Activated T-helper 1 cell treated with anti-CD3 and anti-CD28 coated beads, Interleukin-12 subunit alpha, Interleukin-12 subunit beta, Interleukin-2, Interleukin-4 antibody, amounts not matched to agents 30 ng/mL and 10 ng/mL and 1 ng/mL, durations not matched to agents 14 hours and 24 hours and 36 hours (primary cell): ENCODE measurements at regions of chr4 and their contacts with region 1.

Region 1: DNA sequence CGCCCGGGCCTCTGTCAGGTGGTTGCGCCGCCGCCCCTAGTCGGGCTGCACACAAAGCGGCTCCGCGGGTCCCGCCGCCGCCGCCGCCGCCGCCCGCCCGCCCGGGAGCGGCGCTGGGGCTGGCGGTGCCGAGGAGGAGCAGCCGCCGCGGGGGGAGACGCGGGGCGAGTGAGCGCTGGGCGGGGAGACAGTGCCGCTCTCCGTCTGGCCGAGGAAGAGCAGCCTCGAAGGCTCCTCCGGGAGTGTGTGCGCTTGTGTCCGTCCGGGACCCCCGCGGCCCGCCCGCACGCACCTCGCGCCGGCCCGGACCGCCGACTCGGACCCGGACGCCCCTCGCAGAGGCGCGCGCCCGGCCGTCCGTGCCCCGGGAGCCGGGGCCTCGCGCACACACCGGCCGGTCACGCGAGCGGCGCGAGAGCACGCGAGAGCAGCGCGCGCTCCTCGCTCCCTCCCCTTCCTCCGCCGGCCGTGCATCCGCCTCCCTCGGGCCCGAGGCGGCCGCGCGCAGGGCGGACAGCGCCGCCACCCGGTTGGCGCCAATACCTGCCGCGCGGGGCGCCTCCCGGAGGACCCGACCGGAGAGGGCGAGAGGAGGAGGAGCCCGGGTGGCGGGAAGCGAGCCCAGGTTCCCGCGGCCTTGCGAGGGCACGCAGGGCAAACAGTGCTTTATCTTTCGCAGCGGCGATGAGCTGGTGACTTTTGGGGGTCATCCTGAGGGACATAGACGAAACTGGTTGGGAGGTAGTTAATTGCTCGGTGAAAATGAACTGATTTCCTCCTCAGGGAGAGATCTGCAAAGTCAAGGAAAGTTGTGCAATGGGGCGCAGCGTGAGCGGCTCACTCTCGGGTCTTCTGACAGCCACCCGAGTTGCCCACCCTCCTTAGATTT is at the start of gene PDS5A:
- DNase-seq: peak; percentile 90
- H3K4me3 Mint-ChIP-seq: peak within 1 kb of the TSS; percentile 95
- H3K27ac Mint-ChIP-seq: peak within 1 kb of the TSS; percentile 94
- H3K4me1 Mint-ChIP-seq: peaks cover 33% of the 10 kb centered on the region
- H3K27me3 Mint-ChIP-seq: no peaks in the 10 kb centered on the region
- total RNA-seq, gene PDS5A: 129 and 131 TPM in 2 replicates

Region 2: GRCh38 chr4:39365830-39366771 is 611.6 kb before region 1 on chr4 and contains the start of gene RFC1:
- intact Hi-C with region 1: loop called (anchors 10 kb)
- DNase-seq: peak; percentile 89
- H3K4me3 Mint-ChIP-seq: peak within 1 kb of the TSS; percentile 95
- H3K27ac Mint-ChIP-seq: peak within 1 kb of the TSS; percentile 94
- H3K4me1 Mint-ChIP-seq: peaks cover 26% of the 10 kb centered on the region
- H3K27me3 Mint-ChIP-seq: no peaks in the 10 kb centered on the region
- total RNA-seq, gene RFC1: 83.3 and 87.1 TPM in 2 replicates

Region 3: DNA sequence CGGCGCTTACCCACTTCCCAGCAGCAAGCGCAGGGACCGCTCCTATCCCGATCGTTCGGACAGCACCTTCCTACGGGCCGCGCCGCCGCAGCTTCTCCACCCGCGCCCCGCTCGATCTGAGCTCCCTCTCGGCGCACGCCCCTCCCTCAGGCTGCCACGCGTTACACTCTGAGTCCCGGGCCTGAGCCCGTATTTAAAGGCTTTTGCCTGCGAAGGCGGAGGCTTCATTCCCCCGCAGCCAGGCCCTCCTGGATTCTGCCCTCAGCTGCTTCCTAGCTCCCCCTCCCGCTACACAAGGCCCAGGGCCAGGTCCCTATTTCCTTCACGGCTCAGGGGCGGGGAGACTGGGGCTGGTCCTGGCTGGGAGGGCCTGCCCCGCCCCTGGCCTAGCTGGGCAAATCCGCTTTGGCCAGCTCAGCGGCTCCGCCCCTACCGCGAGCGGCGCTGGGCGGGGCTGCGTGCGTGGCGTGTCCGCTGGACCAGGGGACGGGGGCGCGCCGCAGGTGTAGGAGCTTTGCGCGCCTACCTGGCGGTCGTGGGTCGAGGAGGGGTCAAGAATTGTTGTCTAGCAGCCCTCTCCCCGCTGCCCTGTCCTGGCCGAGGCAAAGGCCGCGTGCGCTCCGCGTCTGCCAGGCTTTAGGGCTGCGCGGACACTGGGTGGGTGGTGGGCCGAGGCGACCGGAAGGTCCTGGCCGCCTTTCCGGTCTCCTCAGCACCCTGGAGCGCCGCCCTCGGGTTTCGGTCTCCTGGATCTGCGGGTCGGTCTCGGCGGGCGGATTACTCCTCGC is 450.3 kb before region 1 on chr4 and contains the start of gene UGDH:
- intact Hi-C with region 1: loop called (anchors 1 kb)
- DNase-seq: peak; percentile 91
- H3K4me3 Mint-ChIP-seq: peak within 1 kb of the TSS; percentile 99
- H3K27ac Mint-ChIP-seq: peak within 1 kb of the TSS; percentile 92
- H3K4me1 Mint-ChIP-seq: peaks cover 19% of the 10 kb centered on the region
- H3K27me3 Mint-ChIP-seq: no peaks in the 10 kb centered on the region
- total RNA-seq, gene UGDH: 26.0 and 30.6 TPM in 2 replicates

Region 4: DNA sequence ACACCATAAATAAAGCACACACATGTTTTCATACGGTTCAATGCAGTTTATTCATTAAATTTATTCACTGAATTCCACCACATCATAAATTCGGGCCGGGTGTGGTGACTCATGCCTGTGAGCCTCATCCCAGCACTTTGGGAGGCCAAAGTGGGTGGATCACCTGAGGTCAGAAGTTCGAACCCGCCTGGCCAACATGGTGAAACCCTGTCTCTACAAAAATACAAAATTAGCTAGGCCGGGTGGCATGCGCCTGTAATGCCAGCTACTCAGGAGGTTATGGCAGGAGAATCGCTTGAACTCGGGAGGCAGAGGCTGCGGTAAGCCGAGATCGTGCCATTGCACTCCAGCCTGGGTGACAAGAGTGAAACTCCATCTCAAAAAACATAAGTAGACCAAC is 131.6 kb before region 1 on chr4:
- intact Hi-C with region 1: loop called (anchors 10 kb)
- DNase-seq: no peak
- H3K4me3 Mint-ChIP-seq: no peak overlapping the region
- H3K27ac Mint-ChIP-seq: no peak overlapping the region
- H3K4me1 Mint-ChIP-seq: no peaks in the 10 kb centered on the region
- H3K27me3 Mint-ChIP-seq: no peaks in the 10 kb centered on the region

Region 5: DNA sequence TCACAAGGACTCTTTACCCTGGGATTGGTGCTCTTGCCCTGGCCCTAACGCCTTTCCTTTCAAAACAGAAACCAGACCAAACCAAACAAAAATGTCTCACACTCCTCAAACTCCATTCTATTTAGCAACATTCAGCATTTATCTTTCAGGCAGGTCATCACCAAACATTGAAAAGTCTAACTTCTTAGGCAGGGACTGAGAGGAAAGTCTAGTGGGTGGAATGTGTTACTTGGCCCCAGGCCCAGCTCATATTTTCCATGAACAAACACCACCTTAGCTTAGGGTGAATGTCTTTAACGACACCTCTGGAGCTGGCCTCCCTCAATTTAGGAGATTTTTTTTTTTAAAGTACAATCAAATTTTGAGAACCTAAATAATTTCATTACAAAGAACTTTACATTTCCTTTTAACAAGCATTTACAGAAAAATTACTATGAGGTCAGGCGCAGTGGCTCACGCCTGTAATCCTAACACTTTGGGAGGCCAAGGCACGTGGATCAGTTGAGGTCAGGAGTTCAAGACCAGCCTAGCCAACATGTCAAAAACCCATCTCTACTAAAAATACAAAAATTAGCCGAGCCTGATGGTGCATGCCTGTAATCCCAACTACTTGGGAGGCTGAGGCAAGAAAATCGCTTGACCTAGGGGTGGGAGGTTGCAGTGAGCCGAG is 68.7 kb after region 1 on chr4:
- intact Hi-C with region 1: loop called (anchors 2 kb)
- DNase-seq: peak; percentile 8
- H3K4me3 Mint-ChIP-seq: peak overlapping the region; percentile 24
- H3K27ac Mint-ChIP-seq: peak overlapping the region; percentile 94
- H3K4me1 Mint-ChIP-seq: peaks cover 23% of the 10 kb centered on the region
- H3K27me3 Mint-ChIP-seq: no peaks in the 10 kb centered on the region

Region 6: GRCh38 chr4:40769266-40769665 is 791.5 kb after region 1 on chr4:
- intact Hi-C with region 1: no loop called
- DNase-seq: no peak
- H3K4me3 Mint-ChIP-seq: no peak overlapping the region
- H3K27ac Mint-ChIP-seq: no peak overlapping the region
- H3K4me1 Mint-ChIP-seq: no peaks in the 10 kb centered on the region
- H3K27me3 Mint-ChIP-seq: peaks cover 11% of the 10 kb centered on the region